Heart left ventricle (tissue), 16 donors: ENCODE measurements at regions of chr9 and their contacts with region 1.

Region 1: DNA sequence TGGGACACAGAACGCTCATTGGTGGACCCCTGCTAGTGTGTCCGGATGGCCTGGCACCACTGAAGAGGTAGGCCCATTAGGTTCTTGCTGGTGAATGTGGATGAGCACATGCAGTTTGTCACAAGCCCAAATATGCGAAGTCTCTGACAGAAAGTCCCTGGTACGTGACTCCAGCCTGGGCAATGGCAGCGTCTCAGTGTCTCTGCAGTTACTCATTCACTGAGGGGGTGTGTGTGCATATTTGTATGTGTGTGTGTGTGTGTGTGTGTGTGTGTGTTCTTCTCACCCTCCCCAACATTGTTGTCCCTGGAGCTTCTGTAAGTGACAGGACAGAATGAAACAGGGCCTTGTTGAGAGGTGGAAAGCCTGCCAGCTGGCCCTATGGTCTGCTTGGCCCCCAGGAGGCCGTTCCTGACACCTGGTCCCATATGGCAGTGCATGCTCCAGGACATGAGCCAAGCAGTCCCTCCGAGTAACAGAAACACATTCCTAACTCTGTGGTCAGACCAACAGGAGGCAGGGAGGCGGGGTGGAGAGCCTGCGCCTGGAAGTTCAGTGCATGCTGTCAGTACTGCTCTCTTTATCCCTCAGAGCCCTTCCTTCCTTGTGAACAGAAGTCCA is 169.9 kb downstream of the SLC28A3 start:
- DNase-seq: peak; percentile 86 to 95 (median 88)
- ATAC-seq: peak; percentile 97 to 99 (median 98)
- H3K4me3 ChIP-seq: no peak overlapping the region
- H3K27ac ChIP-seq: peak overlapping the region in 11 of 12 donors; percentile 21 to 69 (median 48)
- H3K4me1 ChIP-seq: peaks cover 0 to 14% (median 9%) of the 10 kb centered on the region in 12 donors
- H3K27me3 ChIP-seq: no peaks in the 10 kb centered on the region
- CTCF ChIP-seq: peak in 4 of 12 donors; percentile 19 to 43 (median 29)
- POLR2A ChIP-seq: no peak

Region 2: DNA sequence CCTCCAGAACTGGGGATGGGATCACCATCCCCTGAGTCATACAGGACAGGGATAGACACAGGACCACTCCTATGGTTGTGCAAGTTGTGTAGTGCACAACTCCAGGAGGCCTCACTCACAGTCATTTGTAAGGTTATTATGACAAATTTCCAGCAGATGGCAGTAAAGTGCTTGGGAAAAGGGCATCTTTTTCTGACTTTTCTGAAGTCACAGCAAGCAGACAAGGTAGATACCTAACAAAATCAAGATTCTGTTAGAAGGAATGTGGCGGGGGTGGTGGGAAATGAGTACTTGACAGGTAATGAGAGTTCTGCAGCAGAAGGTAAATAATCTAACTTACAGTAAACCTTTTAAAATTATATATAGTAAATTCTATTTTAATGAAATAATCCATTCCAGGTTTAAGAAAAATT is 232.7 kb before region 1 on chr9:
- intact Hi-C with region 1: loop called in 4 of 10 experiments (anchors 2 to 5 kb)
- DNase-seq: no peak
- ATAC-seq: peak in 3 of 4 donors; percentile 58 to 74 (median 63)
- H3K4me3 ChIP-seq: no peak overlapping the region
- H3K27ac ChIP-seq: no peak overlapping the region
- H3K4me1 ChIP-seq: peaks cover 0 to 38% (median 5%) of the 10 kb centered on the region in 12 donors
- H3K27me3 ChIP-seq: no peaks in the 10 kb centered on the region
- CTCF ChIP-seq: peak; percentile 51 to 78 (median 71)
- POLR2A ChIP-seq: no peak

Region 3: DNA sequence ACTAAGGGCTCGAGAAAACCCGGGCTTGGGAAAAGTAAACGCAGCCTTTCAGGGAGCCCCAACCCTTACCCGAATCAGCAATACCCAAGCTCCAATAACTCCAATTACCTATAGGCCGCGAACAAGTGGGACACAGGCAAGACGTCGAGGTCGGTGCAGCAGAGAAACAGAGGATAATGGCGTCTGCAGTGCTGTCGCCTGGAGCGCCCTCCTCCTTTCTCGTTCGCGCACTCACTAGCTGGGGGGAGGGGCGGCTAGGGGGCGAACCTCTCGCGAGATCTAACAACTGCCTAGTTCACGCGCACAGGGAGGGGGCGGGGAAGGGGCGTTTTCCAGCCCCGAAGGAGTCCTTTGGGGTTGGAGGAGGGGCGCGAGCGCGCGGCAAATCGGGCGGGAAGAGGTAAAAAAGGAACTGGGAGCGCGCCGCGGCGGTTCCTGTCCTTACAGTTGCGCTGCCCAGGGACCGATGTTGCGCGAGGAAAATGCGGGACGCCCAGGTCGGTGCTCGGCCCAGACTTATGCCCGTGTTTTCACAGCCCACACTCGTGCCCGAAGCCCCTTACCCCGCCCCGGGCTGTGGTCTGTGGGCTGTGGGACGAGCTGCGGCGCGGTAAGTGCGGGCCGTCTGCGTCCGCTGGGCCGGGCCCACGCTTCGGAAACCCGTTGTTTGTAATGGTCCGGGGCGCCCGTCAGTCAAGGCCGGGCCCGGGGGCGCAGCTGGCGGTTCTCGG is 190.1 kb before region 1 on chr9 and contains the start of gene RMI1:
- intact Hi-C with region 1: loop called in 9 of 10 experiments (anchors 2 to 10 kb)
- DNase-seq: peak; percentile 99 to 100 (median 100)
- ATAC-seq: peak; percentile 92 to 94 (median 94)
- H3K4me3 ChIP-seq: peak within 1 kb of the TSS; percentile 67 to 98 (median 83)
- H3K27ac ChIP-seq: peak within 1 kb of the TSS; percentile 94 to 100 (median 99)
- H3K4me1 ChIP-seq: peaks cover 0 to 50% (median 31%) of the 10 kb centered on the region in 12 donors
- H3K27me3 ChIP-seq: no peaks in the 10 kb centered on the region
- CTCF ChIP-seq: peak in 5 of 12 donors; percentile 10 to 48 (median 40)
- POLR2A ChIP-seq: peak; percentile 47 to 79
- total RNA-seq, gene RMI1: 2.4 to 9.9 (median 5.9) TPM

Region 4: DNA sequence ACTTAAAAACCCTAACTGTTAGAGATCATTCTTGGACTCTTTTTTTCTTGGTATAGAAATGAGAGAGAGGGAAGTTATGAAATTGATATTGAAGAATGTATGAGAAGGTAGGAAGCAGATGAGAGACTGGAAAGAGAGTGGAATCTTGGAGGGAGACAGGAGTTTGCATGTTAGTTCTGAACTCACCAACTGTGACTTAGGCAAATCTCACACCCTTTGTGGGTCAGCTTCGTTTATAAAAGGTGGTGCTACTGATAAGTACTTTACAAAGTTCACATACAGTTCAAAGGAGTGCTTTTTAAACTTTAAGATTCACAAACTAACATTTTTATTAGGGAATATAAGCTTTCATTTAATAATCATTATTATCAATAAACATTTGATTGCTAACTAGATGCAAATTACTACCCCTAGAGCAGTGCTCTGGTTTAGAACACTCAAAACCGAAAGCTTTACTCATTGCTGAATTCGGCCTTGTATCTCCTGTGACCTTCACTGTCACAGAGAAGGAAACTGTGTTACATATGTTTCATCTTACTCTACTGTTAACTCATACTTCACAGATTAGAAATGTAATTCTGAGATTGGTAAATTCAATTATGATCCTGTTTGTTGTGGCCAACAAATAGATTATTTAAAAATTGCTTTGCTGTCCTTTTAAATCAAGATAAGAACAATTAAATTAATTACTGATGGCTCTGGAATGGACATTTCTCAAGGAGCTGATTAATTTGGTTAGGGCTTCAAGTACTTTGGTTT is 46.8 kb before region 1 on chr9:
- intact Hi-C with region 1: loop called in 1 of 10 experiments (anchors 10 kb)
- DNase-seq: no peak
- ATAC-seq: no peak
- H3K4me3 ChIP-seq: no peak overlapping the region
- H3K27ac ChIP-seq: no peak overlapping the region
- H3K4me1 ChIP-seq: peaks cover 0 to 10% (median 0%) of the 10 kb centered on the region in 12 donors
- H3K27me3 ChIP-seq: no peaks in the 10 kb centered on the region
- CTCF ChIP-seq: no peak
- POLR2A ChIP-seq: no peak

Region 5: DNA sequence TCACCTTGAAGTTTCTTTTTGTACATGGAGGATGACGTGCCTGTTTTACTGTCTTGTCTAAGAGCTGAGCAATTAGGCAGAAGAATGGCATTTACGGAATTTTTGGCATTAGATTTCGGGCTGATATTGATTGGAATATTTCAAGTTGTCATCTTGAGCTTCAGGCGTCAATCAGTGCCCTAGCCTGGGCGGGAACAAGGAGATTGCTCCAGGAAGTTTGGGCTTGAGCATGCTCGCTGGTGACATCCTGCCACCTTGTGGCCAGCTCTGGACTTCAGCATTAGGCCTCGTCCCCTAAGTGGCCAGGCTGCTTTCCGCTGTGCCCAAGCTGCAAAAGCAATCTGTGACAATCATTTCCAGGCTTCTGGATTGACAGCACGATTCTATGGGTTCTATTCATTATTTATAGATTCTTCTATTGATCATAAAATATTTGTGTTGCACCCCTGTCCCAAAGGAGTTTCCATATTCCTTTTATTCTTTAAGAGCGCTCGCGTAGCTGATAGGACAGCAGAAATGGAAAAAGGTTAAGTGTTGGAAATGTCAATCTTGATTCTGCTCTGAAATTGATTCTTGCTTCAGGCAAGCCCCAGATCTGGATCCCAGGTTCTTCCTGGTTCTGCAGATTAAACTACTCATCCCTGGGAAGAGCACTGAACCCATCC is 90.6 kb after region 1 on chr9:
- intact Hi-C with region 1: loop called in 6 of 10 experiments (anchors 1 to 10 kb)
- DNase-seq: peak; percentile 79 to 89 (median 83)
- ATAC-seq: peak; percentile 87 to 99 (median 97)
- H3K4me3 ChIP-seq: peak overlapping the region in 8 of 12 donors; percentile 1 to 49 (median 30)
- H3K27ac ChIP-seq: no peak overlapping the region
- H3K4me1 ChIP-seq: peaks cover 0 to 4% (median 0%) of the 10 kb centered on the region in 12 donors
- H3K27me3 ChIP-seq: no peaks in the 10 kb centered on the region
- CTCF ChIP-seq: peak; percentile 87 to 96 (median 92)
- POLR2A ChIP-seq: no peak